Tibial artery (tissue), 4 donors: ENCODE measurements at regions of chr3 and their contacts with region 1.

Region 1: GRCh38 chr3:24220859-24221657 is 273.6 kb downstream of the THRB start:
- DNase-seq: peak; percentile 51 to 77
- H3K4me3 ChIP-seq: no peak overlapping the region
- H3K27ac ChIP-seq: peak overlapping the region; percentile 57 to 63
- H3K4me1 ChIP-seq: peaks cover 0 to 86% (median 35%) of the 10 kb centered on the region in 4 donors
- H3K27me3 ChIP-seq: no peaks in the 10 kb centered on the region
- CTCF ChIP-seq: no peak

Region 2: GRCh38 chr3:23856286-23856685 is 364.8 kb before region 1 on chr3:
- intact Hi-C with region 1: no loop called
- DNase-seq: no peak
- H3K4me3 ChIP-seq: no peak overlapping the region
- H3K27ac ChIP-seq: no peak overlapping the region
- H3K4me1 ChIP-seq: peaks cover 0 to 46% (median 21%) of the 10 kb centered on the region in 4 donors
- H3K27me3 ChIP-seq: no peaks in the 10 kb centered on the region
- CTCF ChIP-seq: no peak

Region 3: DNA sequence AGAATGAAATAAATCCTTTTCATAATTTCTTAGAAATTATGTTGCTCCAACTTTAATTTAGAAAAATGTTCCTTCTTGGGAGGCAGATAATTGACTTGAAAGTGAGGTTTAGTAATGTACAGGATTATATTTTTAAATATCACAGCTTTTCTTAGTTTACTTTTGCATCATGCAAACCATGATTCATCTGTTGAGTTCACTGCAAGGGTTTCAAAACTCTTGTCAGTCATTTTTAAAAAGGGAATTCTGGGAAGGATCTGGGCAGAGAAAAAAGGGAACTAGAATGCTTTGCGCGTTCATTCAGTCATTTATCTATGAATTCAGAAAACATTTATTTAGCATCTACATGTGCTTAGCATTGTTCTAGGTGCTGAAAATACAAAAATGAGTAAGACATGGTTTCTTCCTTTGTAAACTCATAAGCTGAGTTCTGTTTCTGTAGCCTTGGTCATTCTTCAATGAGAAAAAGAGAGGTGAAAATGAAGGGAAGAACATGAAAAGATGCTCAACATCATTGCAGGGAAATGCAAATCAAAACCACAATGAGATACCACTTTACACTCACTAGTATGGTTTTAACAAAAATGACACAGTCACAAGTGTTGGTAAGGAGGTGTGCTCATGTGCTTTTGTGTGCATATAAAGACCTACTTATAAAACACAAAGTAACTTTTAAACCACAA is 66.9 kb before region 1 on chr3:
- intact Hi-C with region 1: loop called (anchors 10 kb)
- DNase-seq: no peak
- H3K4me3 ChIP-seq: no peak overlapping the region
- H3K27ac ChIP-seq: peak overlapping the region; percentile 18 to 44
- H3K4me1 ChIP-seq: peaks cover 0 to 61% (median 8%) of the 10 kb centered on the region in 4 donors
- H3K27me3 ChIP-seq: no peaks in the 10 kb centered on the region
- CTCF ChIP-seq: no peak